A673 (cell line): ENCODE measurements at regions of chr6 and their contacts with region 1.

Region 1: GRCh38 chr6:13920552-13920951 is 4.2 kb upstream of the RNF182 start:
- DNase-seq: no peak
- H3K4me3 ChIP-seq: no peak overlapping the region
- H3K27ac ChIP-seq: no peak overlapping the region
- H3K4me1 ChIP-seq: peaks cover 13% of the 10 kb centered on the region
- H3K27me3 ChIP-seq: no peaks in the 10 kb centered on the region
- CTCF ChIP-seq: no peak

Region 2: GRCh38 chr6:13846841-13847240 is 73.7 kb before region 1 on chr6:
- CTCF ChIA-PET with region 1: interaction called, 11 read pairs
- POLR2A ChIA-PET with region 1: no interaction called
- intact Hi-C with region 1: no loop called
- DNase-seq: peak; percentile 27
- H3K4me3 ChIP-seq: no peak overlapping the region
- H3K27ac ChIP-seq: no peak overlapping the region
- H3K4me1 ChIP-seq: no peaks in the 10 kb centered on the region
- H3K27me3 ChIP-seq: no peaks in the 10 kb centered on the region
- CTCF ChIP-seq: peak; percentile 43; the same call in 1 of the 2 replicates

Region 3: DNA sequence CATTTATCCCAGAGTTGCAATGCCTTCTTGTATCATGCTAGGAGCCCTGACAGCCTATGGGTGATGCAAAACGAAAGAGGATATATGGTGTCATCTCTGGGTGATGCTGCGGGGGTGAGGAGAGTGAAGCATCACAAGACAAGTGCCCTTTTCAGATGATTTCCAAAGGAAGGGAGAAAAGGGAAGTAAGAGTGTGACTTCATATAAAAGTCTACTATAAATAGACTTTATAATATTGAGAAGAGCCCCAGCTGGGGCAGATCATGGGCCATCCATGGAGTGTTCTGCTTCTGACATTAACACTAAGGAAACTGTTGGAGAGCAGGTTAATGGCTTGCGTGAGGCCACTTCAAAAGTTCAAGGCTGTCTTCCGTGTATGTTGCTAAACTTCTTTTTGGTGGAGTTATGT is 201.4 kb after region 1 on chr6:
- CTCF ChIA-PET with region 1: no interaction called
- POLR2A ChIA-PET with region 1: no interaction called
- intact Hi-C with region 1: no loop called
- DNase-seq: no peak
- H3K4me3 ChIP-seq: no peak overlapping the region
- H3K27ac ChIP-seq: no peak overlapping the region
- H3K4me1 ChIP-seq: peaks cover 15% of the 10 kb centered on the region
- H3K27me3 ChIP-seq: no peaks in the 10 kb centered on the region
- CTCF ChIP-seq: no peak